ENCODE measurements at regions of chr13 and their contacts with region 1.

Region 1: GRCh38 chr13:94601446-94602431 is at the start of gene GPR180:
- DNase-seq: peak; percentile 99
- H3K4me3 ChIP-seq: peak within 1 kb of the TSS; percentile 80 to 100 (median 94)
- H3K27ac ChIP-seq: peak within 1 kb of the TSS; percentile 88 to 91 (median 90)
- H3K4me1 ChIP-seq: peaks cover 0 to 14% (median 6%) of the 10 kb centered on the region in 4 donors
- H3K27me3 ChIP-seq: no peaks in the 10 kb centered on the region
- CTCF ChIP-seq: no peak
- EP300 ChIP-seq: no peak
- POLR2A ChIP-seq: peak in 1 of 2 donors; percentile 40
- total RNA-seq, gene GPR180: 4.9 to 6.9 (median 6.4) TPM

Region 2: DNA sequence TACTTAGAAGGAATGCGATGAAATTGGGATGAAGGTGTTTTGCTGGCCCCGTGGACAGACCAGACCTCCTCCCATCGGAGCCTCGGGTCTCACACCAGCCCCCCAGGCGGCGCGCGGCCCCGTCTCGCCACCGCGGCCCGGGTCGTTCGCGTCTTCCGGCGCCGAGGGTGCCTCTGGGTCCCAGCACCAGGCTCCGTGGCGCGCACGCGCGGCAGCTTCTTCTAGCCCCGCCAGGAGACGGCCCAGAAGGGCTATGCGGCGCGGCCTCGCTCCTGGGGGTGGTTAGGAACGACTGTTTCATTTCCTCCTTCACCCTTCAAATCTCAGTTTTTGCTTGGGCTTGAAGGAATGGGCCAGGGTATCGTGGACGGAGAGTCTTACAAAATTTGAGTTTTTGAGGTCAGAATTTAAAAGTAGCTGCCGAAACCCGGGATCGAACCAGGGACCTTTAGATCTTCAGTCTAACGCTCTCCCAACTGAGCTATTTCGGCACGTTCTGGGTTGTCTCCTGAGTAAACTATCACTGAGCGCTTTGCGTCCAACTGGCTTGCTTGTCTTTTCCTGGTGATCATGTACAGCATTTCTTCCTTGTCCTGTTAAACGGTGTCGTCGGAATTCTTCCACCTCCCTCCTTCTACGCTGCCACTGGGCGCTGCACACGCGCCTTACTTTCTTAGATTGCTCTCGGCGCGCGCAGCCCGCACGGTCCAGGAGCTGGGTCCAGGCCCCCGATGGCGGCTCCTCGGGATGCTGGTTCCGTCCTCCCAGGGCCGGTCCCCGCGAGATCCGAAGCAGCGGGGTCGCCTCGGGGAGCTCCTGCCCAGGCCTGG is 52.3 kb before region 1 on chr13:
- intact Hi-C with region 1: loop called (anchors 2 kb)
- DNase-seq: peak; percentile 95
- H3K4me3 ChIP-seq: peak overlapping the region; percentile 67 to 71 (median 68)
- H3K27ac ChIP-seq: peak overlapping the region; percentile 92 to 97 (median 94)
- H3K4me1 ChIP-seq: peaks cover 0 to 18% (median 11%) of the 10 kb centered on the region in 4 donors
- H3K27me3 ChIP-seq: no peaks in the 10 kb centered on the region
- CTCF ChIP-seq: no peak
- EP300 ChIP-seq: no peak
- POLR2A ChIP-seq: peak in 1 of 2 donors; percentile 48

Region 3: GRCh38 chr13:95073599-95074311 is 472.0 kb after region 1 on chr13:
- intact Hi-C with region 1: no loop called
- DNase-seq: no peak
- H3K4me3 ChIP-seq: no peak overlapping the region
- H3K27ac ChIP-seq: no peak overlapping the region
- H3K4me1 ChIP-seq: no peaks in the 10 kb centered on the region
- H3K27me3 ChIP-seq: no peaks in the 10 kb centered on the region
- CTCF ChIP-seq: no peak
- EP300 ChIP-seq: no peak
- POLR2A ChIP-seq: no peak

Region 4: GRCh38 chr13:95387733-95388207 is 786.0 kb after region 1 on chr13:
- intact Hi-C with region 1: loop called (anchors 5 kb)
- DNase-seq: peak; percentile 85
- H3K4me3 ChIP-seq: no peak overlapping the region
- H3K27ac ChIP-seq: peak overlapping the region in 3 of 4 donors; percentile 49 to 73 (median 67)
- H3K4me1 ChIP-seq: peaks cover 0 to 37% (median 23%) of the 10 kb centered on the region in 4 donors
- H3K27me3 ChIP-seq: no peaks in the 10 kb centered on the region
- CTCF ChIP-seq: no peak
- EP300 ChIP-seq: peak in 2 of 4 donors; percentile 38 to 47
- POLR2A ChIP-seq: no peak